CD4-positive, alpha-beta memory T cell (primary cell): ENCODE measurements at regions of chr4 and their contacts with region 1.

Region 1: GRCh38 chr4:38675146-38676121 is 11.4 kb downstream of the KLF3 start:
- DNase-seq: peak; percentile 78 to 81 (median 80)
- H3K4me3 ChIP-seq: no peak overlapping the region
- H3K4me3 Mint-ChIP-seq: peak overlapping the region; percentile 15 to 85 (median 82)
- H3K27ac ChIP-seq: peak overlapping the region; percentile 22
- H3K27ac Mint-ChIP-seq: peak overlapping the region; percentile 76 to 96 (median 88)
- H3K4me1 ChIP-seq: peaks cover 79% of the 10 kb centered on the region
- H3K4me1 Mint-ChIP-seq: peaks cover 72 to 94% (median 84%) of the 10 kb centered on the region in 4 donors
- H3K27me3 ChIP-seq: no peaks in the 10 kb centered on the region
- H3K27me3 Mint-ChIP-seq: no peaks in the 10 kb centered on the region

Region 2: GRCh38 chr4:36758312-36759178 is 1916.9 kb before region 1 on chr4:
- CTCF ChIA-PET with region 1: no interaction called
- POLR2A ChIA-PET with region 1: no interaction called
- intact Hi-C with region 1: no loop called
- DNase-seq: no peak
- H3K4me3 ChIP-seq: no peak overlapping the region
- H3K4me3 Mint-ChIP-seq: no peak overlapping the region
- H3K27ac ChIP-seq: no peak overlapping the region
- H3K27ac Mint-ChIP-seq: no peak overlapping the region
- H3K4me1 ChIP-seq: no peaks in the 10 kb centered on the region
- H3K4me1 Mint-ChIP-seq: no peaks in the 10 kb centered on the region
- H3K27me3 ChIP-seq: no peaks in the 10 kb centered on the region
- H3K27me3 Mint-ChIP-seq: no peaks in the 10 kb centered on the region

Region 3: DNA sequence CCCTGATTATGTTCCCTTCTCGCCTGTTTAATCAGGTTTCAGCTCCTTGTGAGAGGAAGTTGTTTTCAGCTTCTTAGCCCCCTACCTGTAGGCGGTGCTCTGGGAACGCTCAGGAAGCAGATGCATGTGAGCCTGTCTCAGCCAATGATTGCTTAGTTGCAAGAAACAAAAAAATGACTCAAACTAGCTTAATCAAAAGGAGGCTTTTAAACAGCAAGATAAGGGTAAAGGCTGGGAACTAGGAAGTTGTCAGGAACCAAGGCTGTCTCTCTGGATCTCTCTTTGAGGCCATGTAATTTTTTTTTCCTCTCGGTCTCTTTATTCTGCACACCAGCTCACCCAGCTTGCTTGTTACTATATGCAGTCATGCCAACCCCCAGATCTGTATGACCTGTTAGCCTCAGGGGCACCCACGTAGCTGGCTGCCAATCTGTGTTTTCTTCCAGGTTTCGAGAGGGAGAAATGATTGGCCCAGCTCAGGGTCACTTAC is 606.1 kb before region 1 on chr4:
- CTCF ChIA-PET with region 1: interaction called, 11 read pairs
- POLR2A ChIA-PET with region 1: no interaction called
- intact Hi-C with region 1: no loop called
- DNase-seq: peak in 4 of 5 donors; percentile 4 to 52 (median 19)
- H3K4me3 ChIP-seq: no peak overlapping the region
- H3K4me3 Mint-ChIP-seq: no peak overlapping the region
- H3K27ac ChIP-seq: no peak overlapping the region
- H3K27ac Mint-ChIP-seq: peak overlapping the region in 1 of 7 donors; percentile 14
- H3K4me1 ChIP-seq: no peaks in the 10 kb centered on the region
- H3K4me1 Mint-ChIP-seq: peaks cover 2 to 9% (median 4%) of the 10 kb centered on the region in 4 donors
- H3K27me3 ChIP-seq: no peaks in the 10 kb centered on the region
- H3K27me3 Mint-ChIP-seq: no peaks in the 10 kb centered on the region

Region 4: GRCh38 chr4:38319456-38320342 is 355.7 kb before region 1 on chr4:
- CTCF ChIA-PET with region 1: interaction called, 171 read pairs
- POLR2A ChIA-PET with region 1: interaction called, 42 read pairs
- intact Hi-C with region 1: loop called (anchors 1 kb)
- DNase-seq: peak; percentile 77 to 85 (median 80)
- H3K4me3 ChIP-seq: peak overlapping the region in 1 of 2 donors; percentile 42
- H3K4me3 Mint-ChIP-seq: peak overlapping the region; percentile 80 to 96 (median 89)
- H3K27ac ChIP-seq: peak overlapping the region; percentile 65
- H3K27ac Mint-ChIP-seq: peak overlapping the region; percentile 88 to 98 (median 95)
- H3K4me1 ChIP-seq: peaks cover 30% of the 10 kb centered on the region
- H3K4me1 Mint-ChIP-seq: peaks cover 26 to 54% (median 41%) of the 10 kb centered on the region in 4 donors
- H3K27me3 ChIP-seq: no peaks in the 10 kb centered on the region
- H3K27me3 Mint-ChIP-seq: no peaks in the 10 kb centered on the region

Region 5: GRCh38 chr4:38523524-38524448 is 151.6 kb before region 1 on chr4:
- CTCF ChIA-PET with region 1: interaction called, 4 read pairs
- POLR2A ChIA-PET with region 1: no interaction called
- intact Hi-C with region 1: loop called (anchors 5 kb)
- DNase-seq: peak; percentile 52 to 73 (median 63)
- H3K4me3 ChIP-seq: peak overlapping the region; percentile 3 to 18
- H3K4me3 Mint-ChIP-seq: peak overlapping the region; percentile 80 to 92 (median 88)
- H3K27ac ChIP-seq: peak overlapping the region; percentile 6
- H3K27ac Mint-ChIP-seq: peak overlapping the region; percentile 77 to 93 (median 88)
- H3K4me1 ChIP-seq: peaks cover 30% of the 10 kb centered on the region
- H3K4me1 Mint-ChIP-seq: peaks cover 23 to 53% (median 39%) of the 10 kb centered on the region in 4 donors
- H3K27me3 ChIP-seq: no peaks in the 10 kb centered on the region
- H3K27me3 Mint-ChIP-seq: no peaks in the 10 kb centered on the region

Region 6: GRCh38 chr4:38601244-38601897 is 74.1 kb before region 1 on chr4:
- CTCF ChIA-PET with region 1: interaction called, 4 read pairs
- POLR2A ChIA-PET with region 1: no interaction called
- intact Hi-C with region 1: loop called (anchors 5 kb)
- DNase-seq: no peak
- H3K4me3 ChIP-seq: no peak overlapping the region
- H3K4me3 Mint-ChIP-seq: no peak overlapping the region
- H3K27ac ChIP-seq: no peak overlapping the region
- H3K27ac Mint-ChIP-seq: peak overlapping the region in 2 of 7 donors; percentile 42 to 43
- H3K4me1 ChIP-seq: peaks cover 15% of the 10 kb centered on the region
- H3K4me1 Mint-ChIP-seq: peaks cover 20 to 26% (median 24%) of the 10 kb centered on the region in 4 donors
- H3K27me3 ChIP-seq: no peaks in the 10 kb centered on the region
- H3K27me3 Mint-ChIP-seq: no peaks in the 10 kb centered on the region

Region 7: DNA sequence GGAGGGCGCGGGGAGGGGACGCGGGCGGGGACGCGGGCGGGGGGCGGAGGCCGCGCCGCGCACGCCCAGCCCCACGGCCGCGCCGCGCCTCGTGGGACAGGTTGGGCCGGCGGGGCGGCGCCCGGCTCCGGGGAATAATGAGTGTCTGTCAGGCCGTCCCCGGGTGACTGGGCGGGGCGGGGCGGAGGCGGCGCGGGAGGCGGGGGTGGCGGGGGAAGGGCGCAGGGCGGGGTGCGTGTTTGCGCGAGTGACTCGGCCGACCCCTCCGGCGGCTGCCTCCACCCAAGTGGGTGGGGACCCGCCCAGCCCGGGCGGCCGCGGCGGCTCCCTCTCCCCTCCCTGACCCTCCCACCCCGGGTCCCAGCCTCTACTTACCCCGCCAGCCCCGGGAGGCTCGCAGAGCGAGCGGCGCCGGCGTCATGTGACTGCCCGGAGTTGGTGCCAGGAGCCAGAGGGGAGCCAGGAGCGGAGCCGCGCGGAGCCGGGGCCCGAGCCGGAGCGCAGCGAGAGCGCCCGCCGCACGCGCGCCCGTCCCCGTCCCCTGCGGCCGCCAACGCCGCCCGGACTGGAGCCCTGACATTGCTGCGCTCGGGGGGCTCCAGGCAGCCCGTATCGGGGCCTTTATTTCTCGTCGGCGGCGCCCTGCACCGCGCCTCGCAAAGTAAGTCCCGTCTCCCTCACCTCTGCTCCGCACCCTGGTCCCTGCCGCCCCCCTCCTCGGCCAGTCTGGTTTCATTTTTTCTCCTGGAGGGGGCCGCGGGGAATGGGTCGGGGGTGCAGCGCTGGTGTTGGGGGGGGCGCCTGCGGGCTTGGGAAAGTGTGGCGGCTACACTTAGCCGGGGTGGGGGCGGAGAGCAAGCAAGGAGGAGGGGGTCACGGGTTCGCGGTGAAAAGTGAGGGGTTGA is 11.4 kb before region 1 on chr4 and contains the start of gene KLF3:
- CTCF ChIA-PET with region 1: interaction called, 16 read pairs
- POLR2A ChIA-PET with region 1: interaction called, 48 read pairs
- intact Hi-C with region 1: loop called (anchors 1 kb)
- DNase-seq: peak; percentile 93 to 96 (median 94)
- H3K4me3 ChIP-seq: peak within 1 kb of the TSS; percentile 83 to 92
- H3K4me3 Mint-ChIP-seq: peak within 1 kb of the TSS; percentile 89 to 100 (median 98)
- H3K27ac ChIP-seq: peak within 1 kb of the TSS; percentile 92
- H3K27ac Mint-ChIP-seq: peak within 1 kb of the TSS; percentile 91 to 100 (median 99)
- H3K4me1 ChIP-seq: peaks cover 46% of the 10 kb centered on the region
- H3K4me1 Mint-ChIP-seq: peaks cover 40 to 80% (median 56%) of the 10 kb centered on the region in 4 donors
- H3K27me3 ChIP-seq: no peaks in the 10 kb centered on the region
- H3K27me3 Mint-ChIP-seq: no peaks in the 10 kb centered on the region
- total RNA-seq, gene KLF3: 119 to 122 TPM